ENCODE measurements at regions of chrX and their contacts with region 1.

Region 1: GRCh38 chrX:153554519-153555167 is 37.2 kb downstream of the ATP2B3 start:
- DNase-seq: no peak
- ATAC-seq: peak; percentile 94
- H3K4me3 ChIP-seq: no peak overlapping the region
- H3K27ac ChIP-seq: no peak overlapping the region
- H3K4me1 ChIP-seq: no peaks in the 10 kb centered on the region
- H3K27me3 ChIP-seq: no peaks in the 10 kb centered on the region; a peak in 1 of 4 replicates
- CTCF ChIP-seq: peak; percentile 74 to 81 (median 79)
- EP300 ChIP-seq: no peak
- POLR2A ChIP-seq: no peak
- RAD21 ChIP-seq: peak; percentile 73

Region 2: DNA sequence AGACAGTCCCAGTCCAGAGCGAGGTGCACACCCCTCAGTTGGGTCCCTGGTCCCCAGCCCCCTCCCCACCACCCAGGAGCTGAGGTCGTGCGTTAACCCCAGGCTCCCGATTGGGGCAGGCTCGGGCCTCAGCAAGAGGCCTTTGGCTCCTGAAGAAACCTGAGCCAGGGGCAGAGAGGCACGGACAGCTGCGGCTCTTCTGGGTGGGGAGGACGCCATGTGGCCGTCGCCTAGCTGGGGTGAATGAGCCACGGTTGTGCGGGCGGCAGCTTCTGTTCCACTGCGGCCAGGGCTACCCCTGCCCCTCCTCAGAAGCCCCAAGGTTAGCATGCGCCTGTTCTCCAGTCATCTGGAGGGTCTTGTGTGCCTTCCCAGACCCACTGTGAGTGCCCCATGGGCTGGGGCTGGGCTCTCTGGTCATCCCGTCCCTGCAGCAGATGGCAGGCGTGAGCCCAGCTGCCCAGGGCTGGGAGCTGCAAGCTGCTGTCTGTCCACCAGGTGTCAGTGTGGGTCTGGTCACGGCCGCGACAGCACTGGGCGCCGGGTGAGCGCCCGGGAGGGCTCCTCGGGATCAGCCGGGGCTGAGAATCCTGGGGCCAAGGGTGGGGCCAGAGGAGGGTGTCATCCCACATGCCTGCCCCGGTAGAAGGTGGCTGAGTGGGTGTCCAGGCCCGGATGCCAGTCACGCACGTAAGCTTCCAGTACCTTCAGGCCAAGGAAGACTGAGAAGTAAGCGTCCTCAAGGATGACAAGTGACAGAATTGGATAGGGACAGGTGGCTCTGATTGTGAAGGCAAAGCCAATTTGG is 15.3 kb before region 1 on chrX:
- CTCF ChIA-PET with region 1: interaction called, 11 read pairs
- POLR2A ChIA-PET with region 1: no interaction called
- RAD21 ChIA-PET with region 1: no interaction called
- SMC1A ChIA-PET with region 1: no interaction called
- in situ Hi-C with region 1: no loop called
- intact Hi-C with region 1: no loop called
- DNase-seq: no peak
- ATAC-seq: peak; percentile 96
- H3K4me3 ChIP-seq: no peak overlapping the region
- H3K27ac ChIP-seq: no peak overlapping the region
- H3K4me1 ChIP-seq: no peaks in the 10 kb centered on the region
- H3K27me3 ChIP-seq: no peaks in the 10 kb centered on the region
- CTCF ChIP-seq: peak; percentile 85 to 91 (median 88)
- EP300 ChIP-seq: no peak
- POLR2A ChIP-seq: no peak
- RAD21 ChIP-seq: peak; percentile 65

Region 3: GRCh38 chrX:153649178-153649914 is 94.7 kb after region 1 on chrX:
- CTCF ChIA-PET with region 1: interaction called, 6 read pairs
- POLR2A ChIA-PET with region 1: no interaction called
- RAD21 ChIA-PET with region 1: interaction called, 6 read pairs
- SMC1A ChIA-PET with region 1: no interaction called
- in situ Hi-C with region 1: no loop called
- intact Hi-C with region 1: loop called (anchors 2 kb)
- DNase-seq: no peak
- ATAC-seq: peak; percentile 93
- H3K4me3 ChIP-seq: no peak overlapping the region
- H3K27ac ChIP-seq: no peak overlapping the region
- H3K4me1 ChIP-seq: no peaks in the 10 kb centered on the region
- H3K27me3 ChIP-seq: peaks cover 0 to 2% of the 10 kb centered on the region in 2 experiments; a peak in 2 of 4 replicates
- CTCF ChIP-seq: peak; percentile 46 to 64 (median 61)
- EP300 ChIP-seq: no peak
- POLR2A ChIP-seq: no peak
- RAD21 ChIP-seq: peak; percentile 83

Region 4: DNA sequence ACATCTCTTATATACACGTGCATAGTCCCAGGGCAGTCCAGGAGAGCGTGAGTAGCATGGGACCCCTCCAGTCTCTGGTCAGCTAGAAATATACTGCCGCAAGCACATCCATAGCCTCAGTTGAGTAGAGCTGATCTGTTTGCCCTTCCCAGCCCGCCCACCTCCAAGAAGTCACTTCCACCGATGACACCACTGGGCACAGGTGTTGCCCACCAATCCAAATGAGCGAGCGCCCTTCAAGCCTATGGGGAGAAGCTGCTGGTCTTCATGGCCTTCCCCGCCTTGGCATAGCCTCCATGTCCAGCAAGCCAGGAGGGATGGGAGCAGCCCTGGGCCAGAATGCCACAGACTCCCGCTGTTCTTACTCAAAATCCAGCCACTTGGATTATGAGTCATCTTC is 102.5 kb after region 1 on chrX:
- CTCF ChIA-PET with region 1: interaction called, 4 read pairs
- POLR2A ChIA-PET with region 1: no interaction called
- RAD21 ChIA-PET with region 1: interaction called, 4 read pairs
- SMC1A ChIA-PET with region 1: no interaction called
- in situ Hi-C with region 1: loop called (anchors 5 kb)
- intact Hi-C with region 1: no loop called
- DNase-seq: no peak
- ATAC-seq: no peak
- H3K4me3 ChIP-seq: no peak overlapping the region
- H3K27ac ChIP-seq: no peak overlapping the region
- H3K4me1 ChIP-seq: no peaks in the 10 kb centered on the region
- H3K27me3 ChIP-seq: no peaks in the 10 kb centered on the region
- CTCF ChIP-seq: no peak
- EP300 ChIP-seq: no peak
- POLR2A ChIP-seq: no peak
- RAD21 ChIP-seq: no peak

Region 5: DNA sequence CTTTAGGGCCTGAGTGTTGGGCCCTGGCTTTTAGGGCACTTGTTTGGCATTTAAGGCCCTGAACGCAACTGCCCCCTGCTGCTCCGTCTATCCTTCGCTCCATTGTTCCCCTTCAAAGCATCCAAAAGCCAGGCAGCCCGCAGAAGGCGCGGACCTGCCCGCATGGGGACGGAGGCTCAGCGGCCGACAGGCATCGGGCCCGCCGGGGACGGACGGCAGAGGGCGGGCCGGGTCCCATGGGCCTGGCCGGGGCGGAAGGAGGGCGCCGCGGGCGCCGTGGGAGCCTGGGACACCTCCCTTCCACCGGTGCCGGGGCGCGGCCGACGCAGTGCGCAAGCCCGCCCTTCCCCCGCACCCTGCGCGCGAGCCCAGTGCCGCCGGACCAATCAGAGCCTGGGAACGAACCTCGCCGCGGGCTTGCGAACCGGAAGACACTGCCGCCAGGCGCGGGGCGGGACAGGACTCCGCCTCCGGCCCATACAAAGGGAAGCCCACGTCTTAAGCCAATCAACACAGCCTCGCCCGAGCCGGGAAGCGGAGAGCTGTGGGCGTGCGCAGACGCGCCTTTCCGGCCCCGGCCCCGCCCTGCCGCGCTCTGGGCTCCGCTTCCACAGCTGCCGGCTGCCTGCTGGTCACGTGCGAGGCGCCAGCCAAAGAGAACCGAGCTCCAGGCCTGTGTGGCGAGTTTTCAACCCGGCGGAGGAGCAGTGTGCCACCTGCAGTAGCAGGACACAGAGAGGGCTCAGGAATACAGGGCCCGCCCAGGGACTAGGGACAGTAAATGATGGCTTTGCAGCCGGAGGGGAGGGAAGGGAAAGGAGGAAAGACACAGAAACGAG is 373.5 kb after region 1 on chrX:
- CTCF ChIA-PET with region 1: no interaction called
- POLR2A ChIA-PET with region 1: no interaction called
- RAD21 ChIA-PET with region 1: no interaction called
- SMC1A ChIA-PET with region 1: no interaction called
- in situ Hi-C with region 1: no loop called
- intact Hi-C with region 1: no loop called
- DNase-seq: peak; percentile 91
- ATAC-seq: peak; percentile 78
- H3K4me3 ChIP-seq: peak overlapping the region; percentile 74
- H3K27ac ChIP-seq: peak overlapping the region; percentile 98
- H3K4me1 ChIP-seq: peaks cover 9% of the 10 kb centered on the region; the same call in 1 of the 2 replicates
- H3K27me3 ChIP-seq: no peaks in the 10 kb centered on the region
- CTCF ChIP-seq: 0 out of 6 replicates have a peak, but pooled peaks of 2 of the 3 experiments have one; percentile 3 to 7
- EP300 ChIP-seq: no peak
- POLR2A ChIP-seq: peak; percentile 74; the same call in 1 of the 2 replicates
- RAD21 ChIP-seq: no peak

Region 6: DNA sequence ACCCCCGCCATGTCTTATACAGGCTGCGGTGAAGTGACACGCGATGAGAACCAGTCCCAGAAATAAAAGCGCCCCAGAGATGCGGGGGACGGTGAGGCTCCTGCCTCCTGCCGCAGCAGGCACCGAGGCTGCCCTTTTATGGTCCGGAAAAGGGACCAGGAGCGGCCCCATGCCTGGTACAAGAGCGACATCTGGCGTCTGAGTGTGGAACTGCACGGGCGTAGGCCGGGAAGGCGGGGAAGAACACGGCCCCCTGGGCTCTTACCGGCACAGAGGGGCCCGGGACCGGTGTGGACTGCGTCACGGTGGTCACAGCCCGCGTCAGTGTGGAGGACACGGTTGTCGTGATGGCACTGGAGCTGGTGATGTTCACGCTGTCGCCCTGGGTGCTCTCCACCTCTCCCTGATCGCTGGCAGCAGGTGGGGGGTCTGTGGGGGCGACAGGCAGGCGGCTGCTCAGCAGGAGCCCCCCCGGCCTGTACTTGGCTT is 398.7 kb after region 1 on chrX:
- CTCF ChIA-PET with region 1: no interaction called
- POLR2A ChIA-PET with region 1: no interaction called
- RAD21 ChIA-PET with region 1: no interaction called
- SMC1A ChIA-PET with region 1: no interaction called
- in situ Hi-C with region 1: no loop called
- intact Hi-C with region 1: loop called (anchors 5 kb)
- DNase-seq: no peak
- ATAC-seq: peak; percentile 85
- H3K4me3 ChIP-seq: no peak overlapping the region
- H3K27ac ChIP-seq: peak overlapping the region; percentile 37
- H3K4me1 ChIP-seq: no peaks in the 10 kb centered on the region
- H3K27me3 ChIP-seq: no peaks in the 10 kb centered on the region
- CTCF ChIP-seq: peak; percentile 92 to 100 (median 95); a peak in 5 of 6 replicates
- EP300 ChIP-seq: no peak
- POLR2A ChIP-seq: peak; percentile 74
- RAD21 ChIP-seq: peak; percentile 87